ENCODE measurements at regions of chr9 and their contacts with region 1.

Region 1: DNA sequence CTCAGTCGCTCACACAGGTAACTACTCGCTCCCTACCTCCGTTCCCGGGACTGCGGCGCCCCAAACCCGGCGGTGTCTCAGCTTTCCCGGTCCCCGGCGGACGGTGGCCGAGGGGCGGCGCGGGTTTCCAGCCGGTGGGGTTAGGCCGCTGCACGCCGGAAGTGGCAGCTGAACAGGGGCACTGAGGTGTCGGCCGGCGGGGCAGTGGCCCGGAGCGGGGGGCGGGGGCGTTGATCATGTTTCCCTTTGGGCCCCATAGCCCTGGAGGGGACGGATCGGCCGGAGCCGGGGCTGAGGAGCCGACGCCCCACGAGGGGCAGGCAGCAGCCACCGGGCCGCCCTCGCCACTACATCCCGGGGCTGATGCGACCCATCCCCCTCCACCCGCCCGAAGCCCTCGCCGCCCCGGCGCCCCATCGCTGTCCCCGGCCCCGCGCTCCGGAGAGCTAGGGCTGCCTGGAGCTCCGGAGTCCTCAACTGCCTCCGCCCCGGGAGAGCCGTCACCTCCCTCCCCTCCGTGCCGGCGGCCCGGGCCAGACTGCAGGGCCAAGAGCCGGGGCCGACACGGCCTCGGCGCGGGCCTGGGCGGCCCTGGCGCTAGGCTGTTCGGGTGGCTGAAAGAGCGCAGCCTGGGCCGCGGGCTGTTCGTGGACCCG is at the start of gene DCAF10:
- DNase-seq: peak; percentile 72
- ATAC-seq: peak; percentile 92
- H3K4me3 ChIP-seq: peak within 1 kb of the TSS; percentile 93 to 96 (median 94)
- H3K27ac ChIP-seq: peak within 1 kb of the TSS; percentile 89
- H3K4me1 ChIP-seq: peaks cover 32% of the 10 kb centered on the region
- H3K27me3 ChIP-seq: no peaks in the 10 kb centered on the region
- CTCF ChIP-seq: peak; percentile 55
- EP300 ChIP-seq: peak in 1 of 2 experiments; percentile 67; a peak in 2 of 4 replicates
- POLR2A ChIP-seq: peak; percentile 80 to 85
- RAD21 ChIP-seq: peak; percentile 62; the same call in 1 of the 2 replicates
- total RNA-seq, gene DCAF10: 9.2 and 13.5 TPM in 2 replicates

Region 2: DNA sequence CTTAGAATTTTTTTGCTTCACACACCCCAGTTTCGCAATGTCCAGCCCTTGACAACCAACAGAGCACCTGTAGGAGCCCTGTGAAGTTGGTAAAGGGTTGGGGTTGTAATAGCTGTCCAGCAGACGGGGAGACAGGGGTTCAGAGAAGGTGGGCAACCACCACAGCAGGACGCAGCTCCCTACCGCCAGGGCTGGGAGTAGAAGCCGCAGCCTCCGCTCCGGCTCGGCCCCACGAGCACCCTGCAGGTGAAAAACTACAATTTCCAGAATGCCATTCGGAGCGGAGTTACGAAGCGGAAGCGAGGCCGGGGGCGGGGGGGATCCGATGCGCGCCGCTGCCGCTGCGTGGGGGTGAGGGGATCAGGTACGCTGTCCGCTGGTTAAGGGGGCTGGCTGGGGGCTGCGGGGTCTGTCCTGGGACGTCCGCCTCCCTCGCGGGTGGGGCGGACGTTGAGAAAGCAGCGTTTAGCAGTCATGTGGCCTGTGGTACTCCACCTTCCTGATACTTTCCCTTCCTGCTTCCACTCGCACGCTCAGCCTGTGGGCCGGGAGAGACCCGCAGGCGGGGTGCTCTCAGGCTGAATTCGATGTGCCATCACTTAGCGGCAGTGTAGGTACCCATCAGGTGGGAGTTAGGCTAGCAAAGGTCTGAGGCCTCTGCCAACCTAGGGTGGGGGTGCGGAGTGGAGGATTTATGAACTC is 47.1 kb before region 1 on chr9 and contains the start of gene TRMT10B:
- CTCF ChIA-PET with region 1: no interaction called
- POLR2A ChIA-PET with region 1: interaction called, 3 read pairs
- in situ Hi-C with region 1: no loop called
- intact Hi-C with region 1: loop called (anchors 1 kb)
- DNase-seq: peak; percentile 61
- ATAC-seq: peak; percentile 98
- H3K4me3 ChIP-seq: peak within 1 kb of the TSS; percentile 84 to 90 (median 89)
- H3K27ac ChIP-seq: no peak within 1 kb of the TSS
- H3K4me1 ChIP-seq: peaks cover 23% of the 10 kb centered on the region
- H3K27me3 ChIP-seq: peaks cover 0 to 1% of the 10 kb centered on the region in 2 experiments; a peak in 3 of 5 replicates
- CTCF ChIP-seq: no peak; the same call in 1 of the 2 replicates
- EP300 ChIP-seq: no peak
- POLR2A ChIP-seq: peak; percentile 48 to 78; a peak in 3 of 4 replicates
- RAD21 ChIP-seq: no peak
- total RNA-seq, gene TRMT10B: 3.1 and 3.3 TPM in 2 replicates

Region 3: DNA sequence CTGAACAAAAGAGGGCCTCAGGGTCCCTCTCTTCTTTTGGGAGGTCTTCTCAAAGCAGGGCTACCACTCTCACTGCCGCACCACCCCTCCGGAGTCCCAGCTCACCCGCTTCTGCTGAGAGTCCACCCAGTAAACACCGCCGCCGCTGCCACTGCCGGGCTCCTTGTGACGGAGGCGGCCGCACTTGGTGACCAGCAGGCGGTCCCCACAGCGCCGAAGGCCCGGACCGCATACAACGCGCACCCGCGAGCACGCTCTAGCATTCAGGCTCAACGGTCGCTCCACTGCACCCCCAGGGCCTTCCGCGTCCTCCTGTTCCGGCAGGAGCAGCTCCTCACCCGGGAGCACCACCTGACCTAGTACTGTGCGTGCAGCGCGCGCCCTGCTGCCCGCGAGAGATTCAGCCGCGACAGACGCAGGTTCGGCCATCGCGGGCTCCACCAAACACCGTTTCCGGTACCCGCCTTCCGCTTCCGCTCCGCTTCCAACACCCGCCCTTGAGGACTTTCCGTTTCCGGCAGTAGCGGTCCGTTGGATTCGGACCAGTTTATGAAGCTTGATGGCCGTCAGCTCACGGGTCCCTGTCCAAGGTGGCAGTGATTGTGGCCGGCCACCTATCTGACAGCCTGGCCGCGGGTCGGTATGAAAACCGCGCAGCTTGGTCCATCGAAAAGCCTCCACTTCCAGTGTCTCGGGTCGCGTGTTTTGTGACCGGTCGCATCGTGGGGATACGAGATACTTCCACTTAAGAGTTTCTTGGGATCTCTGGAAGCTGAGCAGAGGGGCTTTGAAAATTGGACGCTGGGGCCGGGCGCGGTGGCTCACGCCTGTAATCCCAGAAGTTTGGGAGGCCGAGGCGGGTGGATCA is 15.9 kb before region 1 on chr9 and contains the start of gene EXOSC3:
- CTCF ChIA-PET with region 1: interaction called, 4 read pairs
- POLR2A ChIA-PET with region 1: interaction called, 29 read pairs
- in situ Hi-C with region 1: no loop called
- intact Hi-C with region 1: loop called (anchors 1 kb)
- DNase-seq: peak; percentile 92
- ATAC-seq: peak; percentile 96
- H3K4me3 ChIP-seq: peak within 1 kb of the TSS; percentile 81 to 95 (median 95)
- H3K27ac ChIP-seq: peak within 1 kb of the TSS; percentile 87
- H3K4me1 ChIP-seq: peaks cover 40% of the 10 kb centered on the region
- H3K27me3 ChIP-seq: no peaks in the 10 kb centered on the region
- CTCF ChIP-seq: peak; percentile 59
- EP300 ChIP-seq: peak in 1 of 2 experiments; percentile 27; a peak in 1 of 4 replicates
- POLR2A ChIP-seq: peak; percentile 95 to 96
- RAD21 ChIP-seq: no peak; the same call in 1 of the 2 replicates
- total RNA-seq, gene EXOSC3: 68.7 and 98.1 TPM in 2 replicates

Region 4: GRCh38 chr9:37889536-37889935 is 88.8 kb after region 1 on chr9:
- CTCF ChIA-PET with region 1: no interaction called
- POLR2A ChIA-PET with region 1: no interaction called
- in situ Hi-C with region 1: no loop called
- intact Hi-C with region 1: no loop called
- DNase-seq: no peak
- ATAC-seq: no peak
- H3K4me3 ChIP-seq: no peak overlapping the region
- H3K27ac ChIP-seq: no peak overlapping the region
- H3K4me1 ChIP-seq: no peaks in the 10 kb centered on the region
- H3K27me3 ChIP-seq: no peaks in the 10 kb centered on the region
- CTCF ChIP-seq: no peak
- EP300 ChIP-seq: no peak
- POLR2A ChIP-seq: no peak
- RAD21 ChIP-seq: no peak

Region 5: DNA sequence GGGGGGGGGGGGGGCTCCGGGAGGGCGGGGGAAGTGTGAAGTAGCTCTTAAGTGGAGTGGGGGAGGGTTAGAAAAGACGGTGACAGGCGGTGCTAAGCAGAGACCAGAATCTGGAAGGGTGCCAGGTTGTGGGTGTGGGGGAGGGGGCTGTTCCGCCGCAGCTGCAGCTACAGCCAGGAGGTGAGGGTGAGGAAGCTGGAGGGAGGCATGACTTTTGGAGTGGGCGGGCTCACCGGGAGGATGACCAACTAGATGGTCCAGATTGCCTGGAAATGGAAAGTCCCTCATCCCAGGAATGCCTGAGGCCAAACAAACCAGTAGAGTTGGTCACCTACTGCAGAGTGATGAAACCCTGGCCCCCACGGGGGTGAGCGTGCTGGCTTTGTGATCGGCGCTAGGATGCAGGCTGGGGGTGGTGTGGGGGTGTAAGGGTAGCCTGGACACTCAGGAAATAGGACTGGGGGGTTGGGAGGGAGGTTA is 426.3 kb after region 1 on chr9:
- CTCF ChIA-PET with region 1: no interaction called
- POLR2A ChIA-PET with region 1: no interaction called
- in situ Hi-C with region 1: no loop called
- intact Hi-C with region 1: no loop called
- DNase-seq: peak; percentile 17
- ATAC-seq: peak; percentile 80
- H3K4me3 ChIP-seq: no peak overlapping the region
- H3K27ac ChIP-seq: no peak overlapping the region
- H3K4me1 ChIP-seq: peaks cover 6% of the 10 kb centered on the region; the same call in 1 of the 2 replicates
- H3K27me3 ChIP-seq: peaks cover 0 to 24% of the 10 kb centered on the region in 2 experiments; a peak in 1 of 5 replicates
- CTCF ChIP-seq: no peak
- EP300 ChIP-seq: no peak
- POLR2A ChIP-seq: no peak
- RAD21 ChIP-seq: no peak

Measured in HepG2 (cell line).